ENCODE measurements at regions of chr10 and their contacts with region 1.

Region 1: DNA sequence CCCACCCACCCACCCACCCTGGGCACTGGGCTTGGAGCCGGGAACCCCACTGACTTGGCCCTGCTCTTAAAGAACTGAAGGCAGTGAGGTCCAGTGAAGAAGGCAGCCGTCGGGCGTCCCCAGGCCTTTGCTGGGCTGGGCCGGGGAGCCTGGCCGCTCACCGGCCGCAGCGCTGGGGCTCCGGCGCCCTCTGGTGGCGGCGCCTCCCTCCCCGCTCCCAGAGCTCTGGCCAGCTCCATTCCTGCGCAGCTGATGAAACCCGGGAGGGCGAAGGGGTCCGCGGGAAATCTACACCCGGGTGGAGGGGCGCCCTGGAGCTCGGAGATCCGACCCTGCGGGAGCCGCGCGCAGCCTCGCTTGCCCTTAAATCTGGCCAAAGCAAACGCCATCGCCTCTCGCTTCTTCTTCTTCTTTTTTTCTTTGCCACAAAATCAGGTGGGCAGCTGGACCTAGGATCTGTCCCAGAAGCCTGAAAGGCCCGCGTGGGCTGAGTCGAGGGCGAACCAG is 1.7 kb upstream of the CXCL12 start:
- DNase-seq: peak; percentile 78
- ATAC-seq: peak; percentile 46
- H3K4me3 Mint-ChIP-seq: peak overlapping the region; percentile 41; the same call in 1 of the 2 replicates
- H3K27ac Mint-ChIP-seq: no peak overlapping the region
- H3K4me1 Mint-ChIP-seq: peaks cover 28% of the 10 kb centered on the region
- H3K27me3 Mint-ChIP-seq: peaks cover 25% of the 10 kb centered on the region
- CTCF ChIP-seq: peak; percentile 68

Region 2: GRCh38 chr10:44045020-44045419 is 341.6 kb before region 1 on chr10:
- CTCF ChIA-PET with region 1: no interaction called
- POLR2A ChIA-PET with region 1: no interaction called
- DNase-seq: no peak
- ATAC-seq: no peak
- H3K4me3 Mint-ChIP-seq: no peak overlapping the region
- H3K27ac Mint-ChIP-seq: no peak overlapping the region
- H3K4me1 Mint-ChIP-seq: peaks cover 30% of the 10 kb centered on the region
- H3K27me3 Mint-ChIP-seq: no peaks in the 10 kb centered on the region; the same call in none of the 2 replicates
- CTCF ChIP-seq: no peak

Region 3: GRCh38 chr10:44310762-44311562 is 75.6 kb before region 1 on chr10:
- CTCF ChIA-PET with region 1: interaction called, 19 read pairs
- POLR2A ChIA-PET with region 1: no interaction called
- DNase-seq: peak; percentile 89
- ATAC-seq: peak; percentile 93
- H3K4me3 Mint-ChIP-seq: peak overlapping the region; percentile 50
- H3K27ac Mint-ChIP-seq: no peak overlapping the region
- H3K4me1 Mint-ChIP-seq: peaks cover 23% of the 10 kb centered on the region
- H3K27me3 Mint-ChIP-seq: peaks cover 32% of the 10 kb centered on the region
- CTCF ChIP-seq: 0 out of 2 replicates have a peak, but pooled peaks have one; percentile 61

Region 4: DNA sequence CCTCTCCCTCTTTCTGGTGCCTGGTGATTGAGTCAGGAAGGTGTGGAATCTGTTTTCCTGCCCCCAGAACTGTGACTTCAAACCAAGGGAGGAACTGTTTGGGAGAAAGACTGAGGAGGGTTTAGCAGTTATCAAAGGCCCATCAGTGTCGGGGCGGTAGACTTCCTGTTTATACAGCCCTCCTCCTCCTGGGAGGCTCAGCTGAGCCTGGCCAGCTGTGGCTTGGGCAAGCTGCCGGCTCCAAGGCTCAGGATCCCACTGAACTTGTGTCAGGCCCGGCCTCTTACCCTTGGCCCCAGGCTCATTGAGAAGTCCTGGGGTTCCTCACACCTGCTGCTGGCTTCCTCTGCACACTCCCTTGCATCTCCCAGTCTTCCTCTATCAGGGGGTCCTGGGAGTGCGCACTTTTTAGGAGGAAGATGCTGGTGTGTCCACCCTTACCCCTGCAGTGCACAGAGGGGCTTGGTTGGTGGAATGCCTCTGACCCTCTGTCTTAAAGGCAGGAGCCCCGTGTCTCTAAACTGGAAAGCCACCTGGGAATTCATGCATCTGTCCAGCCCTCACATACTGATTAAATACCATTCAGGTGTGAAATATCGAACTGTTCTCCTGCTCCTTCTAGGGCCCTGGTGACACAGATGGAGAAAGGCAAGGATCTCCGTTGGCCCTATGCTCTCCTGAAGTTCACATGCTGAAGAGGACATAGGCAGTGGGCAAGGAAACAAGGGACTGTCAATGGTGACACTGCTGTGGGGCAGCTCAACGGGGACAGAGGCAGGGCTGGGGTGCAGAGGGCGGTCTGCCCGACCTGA is 34.1 kb before region 1 on chr10:
- CTCF ChIA-PET with region 1: interaction called, 19 read pairs
- POLR2A ChIA-PET with region 1: interaction called, 3 read pairs
- DNase-seq: no peak
- ATAC-seq: peak; percentile 35
- H3K4me3 Mint-ChIP-seq: no peak overlapping the region
- H3K27ac Mint-ChIP-seq: 0 out of 2 replicates have a peak overlapping the region, but pooled peaks have one; percentile 12
- H3K4me1 Mint-ChIP-seq: peaks cover 34% of the 10 kb centered on the region
- H3K27me3 Mint-ChIP-seq: no peaks in the 10 kb centered on the region; the same call in 1 of the 2 replicates
- CTCF ChIP-seq: no peak

Region 5: GRCh38 chr10:44370731-44371248 is 15.8 kb before region 1 on chr10:
- CTCF ChIA-PET with region 1: interaction called, 40 read pairs
- POLR2A ChIA-PET with region 1: interaction called, 19 read pairs
- DNase-seq: peak; percentile 64
- ATAC-seq: peak; percentile 88
- H3K4me3 Mint-ChIP-seq: peak overlapping the region; percentile 49
- H3K27ac Mint-ChIP-seq: peak overlapping the region; percentile 98
- H3K4me1 Mint-ChIP-seq: peaks cover 69% of the 10 kb centered on the region
- H3K27me3 Mint-ChIP-seq: no peaks in the 10 kb centered on the region
- CTCF ChIP-seq: no peak

Region 6: DNA sequence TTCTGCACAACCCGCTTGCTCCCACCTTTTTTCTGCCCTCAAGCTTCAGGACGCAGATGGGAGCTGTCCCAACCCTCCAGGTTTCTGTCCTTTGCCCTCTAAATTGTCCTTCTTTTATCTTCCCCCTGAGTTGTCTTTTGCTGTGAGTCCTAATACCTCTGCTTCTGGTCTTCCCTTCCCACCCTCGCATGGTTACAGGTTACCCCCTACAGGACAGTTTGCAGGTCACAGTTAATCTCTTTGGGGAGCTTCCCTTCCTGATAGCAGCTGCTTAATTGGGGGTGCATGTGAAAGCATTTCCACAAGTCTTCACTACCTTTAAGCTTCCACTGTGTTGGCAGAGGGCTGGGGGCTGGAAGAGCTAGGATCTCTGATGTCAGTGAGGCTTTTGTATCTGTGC is 119.8 kb after region 1 on chr10:
- CTCF ChIA-PET with region 1: interaction called, 24 read pairs
- POLR2A ChIA-PET with region 1: interaction called, 3 read pairs
- DNase-seq: no peak
- ATAC-seq: peak; percentile 56
- H3K4me3 Mint-ChIP-seq: no peak overlapping the region
- H3K27ac Mint-ChIP-seq: no peak overlapping the region
- H3K4me1 Mint-ChIP-seq: no peaks in the 10 kb centered on the region
- H3K27me3 Mint-ChIP-seq: no peaks in the 10 kb centered on the region; the same call in 1 of the 2 replicates
- CTCF ChIP-seq: no peak

Region 7: GRCh38 chr10:44857363-44858016 is 470.9 kb after region 1 on chr10:
- CTCF ChIA-PET with region 1: interaction called, 14 read pairs
- POLR2A ChIA-PET with region 1: no interaction called
- DNase-seq: peak; percentile 92
- ATAC-seq: peak; percentile 89
- H3K4me3 Mint-ChIP-seq: no peak overlapping the region
- H3K27ac Mint-ChIP-seq: no peak overlapping the region
- H3K4me1 Mint-ChIP-seq: peaks cover 38% of the 10 kb centered on the region
- H3K27me3 Mint-ChIP-seq: peaks cover 38% of the 10 kb centered on the region
- CTCF ChIP-seq: peak; percentile 95